CD4-positive, alpha-beta memory T cell (primary cell): ENCODE measurements at regions of chr1 and their contacts with region 1.

Region 1: GRCh38 chr1:32335790-32336590 is at the start of gene MARCKSL1:
- DNase-seq: peak; percentile 82 to 85 (median 85)
- H3K4me3 ChIP-seq: peak within 1 kb of the TSS; percentile 29 to 48
- H3K4me3 Mint-ChIP-seq: peak within 1 kb of the TSS; percentile 83 to 92 (median 87)
- H3K27ac ChIP-seq: peak within 1 kb of the TSS; percentile 45
- H3K27ac Mint-ChIP-seq: peak within 1 kb of the TSS; percentile 31 to 95 (median 85)
- H3K4me1 ChIP-seq: peaks cover 40% of the 10 kb centered on the region
- H3K4me1 Mint-ChIP-seq: peaks cover 26 to 44% (median 34%) of the 10 kb centered on the region in 4 donors
- H3K27me3 ChIP-seq: no peaks in the 10 kb centered on the region
- H3K27me3 Mint-ChIP-seq: no peaks in the 10 kb centered on the region
- total RNA-seq, gene MARCKSL1: 46.5 to 47.3 TPM

Region 2: GRCh38 chr1:32200226-32201010 is 135.6 kb before region 1 on chr1 and contains the start of gene CCDC28B:
- CTCF ChIA-PET with region 1: no interaction called
- POLR2A ChIA-PET with region 1: interaction called, 14 read pairs
- intact Hi-C with region 1: no loop called
- DNase-seq: peak; percentile 51 to 73 (median 58)
- H3K4me3 ChIP-seq: peak within 1 kb of the TSS; percentile 57 to 85
- H3K4me3 Mint-ChIP-seq: peak within 1 kb of the TSS; percentile 85 to 95 (median 92)
- H3K27ac ChIP-seq: peak within 1 kb of the TSS; percentile 84
- H3K27ac Mint-ChIP-seq: peak within 1 kb of the TSS; percentile 87 to 97 (median 95)
- H3K4me1 ChIP-seq: peaks cover 59% of the 10 kb centered on the region
- H3K4me1 Mint-ChIP-seq: peaks cover 38 to 76% (median 56%) of the 10 kb centered on the region in 4 donors
- H3K27me3 ChIP-seq: no peaks in the 10 kb centered on the region
- H3K27me3 Mint-ChIP-seq: no peaks in the 10 kb centered on the region
- total RNA-seq, gene CCDC28B: 4.2 to 5.1 TPM

Region 3: DNA sequence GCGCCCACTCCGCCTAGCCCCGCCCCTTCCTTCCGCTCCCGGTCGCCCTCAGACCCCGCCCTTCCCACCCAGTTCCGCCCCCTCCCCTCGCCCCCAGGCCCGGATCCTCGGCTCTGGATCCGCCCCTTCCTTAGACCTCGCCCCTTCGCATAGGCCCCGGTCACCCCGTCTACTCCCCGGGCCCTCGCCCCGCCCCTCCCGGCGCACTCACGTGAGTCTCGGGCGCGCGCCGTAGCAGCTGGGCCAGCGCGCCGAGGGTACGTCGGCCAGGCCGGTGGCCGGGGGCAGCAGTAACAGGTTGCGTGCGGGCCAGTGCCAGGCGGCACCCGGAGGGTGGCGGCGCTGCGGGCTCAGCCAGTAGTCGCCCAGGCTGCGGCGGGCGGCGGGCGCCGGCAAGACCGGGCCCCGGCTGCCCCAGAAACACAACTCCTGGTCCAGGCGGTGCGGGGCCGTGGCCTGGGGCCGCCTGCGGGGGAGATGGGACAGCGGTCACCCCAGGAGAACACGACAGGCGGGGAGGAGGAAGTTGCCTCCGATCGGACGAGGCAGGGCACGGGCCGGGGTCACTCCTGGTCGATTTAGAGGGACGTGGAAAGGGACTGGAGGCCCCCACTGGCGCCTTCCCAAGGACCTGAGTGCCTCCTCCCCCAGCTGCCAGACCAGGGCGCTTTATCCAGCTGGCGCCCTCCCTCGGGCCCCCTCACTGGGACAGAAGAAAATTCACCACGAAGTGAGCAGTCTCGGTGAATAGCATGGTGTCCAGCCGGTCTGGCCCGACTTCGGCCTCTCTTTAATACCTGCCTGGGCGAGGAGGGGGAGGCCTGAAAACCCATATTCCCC is 15.6 kb after region 1 on chr1:
- CTCF ChIA-PET with region 1: interaction called, 13 read pairs
- POLR2A ChIA-PET with region 1: interaction called, 173 read pairs
- intact Hi-C with region 1: loop called (anchors 1 kb)
- DNase-seq: peak; percentile 90 to 94 (median 91)
- H3K4me3 ChIP-seq: peak overlapping the region; percentile 52 to 65
- H3K4me3 Mint-ChIP-seq: peak overlapping the region; percentile 71 to 90 (median 82)
- H3K27ac ChIP-seq: peak overlapping the region; percentile 71
- H3K27ac Mint-ChIP-seq: peak overlapping the region; percentile 86 to 97 (median 92)
- H3K4me1 ChIP-seq: peaks cover 39% of the 10 kb centered on the region
- H3K4me1 Mint-ChIP-seq: peaks cover 22 to 62% (median 39%) of the 10 kb centered on the region in 4 donors
- H3K27me3 ChIP-seq: no peaks in the 10 kb centered on the region
- H3K27me3 Mint-ChIP-seq: no peaks in the 10 kb centered on the region

Region 4: GRCh38 chr1:32372149-32372756 is 36.3 kb after region 1 on chr1:
- CTCF ChIA-PET with region 1: interaction called, 14 read pairs
- POLR2A ChIA-PET with region 1: interaction called, 26 read pairs
- intact Hi-C with region 1: loop called (anchors 1 kb)
- DNase-seq: peak; percentile 74 to 86 (median 77)
- H3K4me3 ChIP-seq: no peak overlapping the region
- H3K4me3 Mint-ChIP-seq: peak overlapping the region in 4 of 8 donors; percentile 5 to 36 (median 16)
- H3K27ac ChIP-seq: no peak overlapping the region
- H3K27ac Mint-ChIP-seq: peak overlapping the region in 6 of 7 donors; percentile 10 to 80 (median 47)
- H3K4me1 ChIP-seq: peaks cover 15% of the 10 kb centered on the region
- H3K4me1 Mint-ChIP-seq: peaks cover 13 to 22% (median 20%) of the 10 kb centered on the region in 4 donors
- H3K27me3 ChIP-seq: no peaks in the 10 kb centered on the region
- H3K27me3 Mint-ChIP-seq: no peaks in the 10 kb centered on the region

Region 5: GRCh38 chr1:32413507-32414185 is 77.7 kb after region 1 on chr1:
- CTCF ChIA-PET with region 1: no interaction called
- POLR2A ChIA-PET with region 1: no interaction called
- intact Hi-C with region 1: loop called (anchors 1 kb)
- DNase-seq: peak; percentile 70 to 81 (median 73)
- H3K4me3 ChIP-seq: no peak overlapping the region
- H3K4me3 Mint-ChIP-seq: no peak overlapping the region
- H3K27ac ChIP-seq: no peak overlapping the region
- H3K27ac Mint-ChIP-seq: peak overlapping the region in 2 of 7 donors; percentile 40 to 54
- H3K4me1 ChIP-seq: no peaks in the 10 kb centered on the region
- H3K4me1 Mint-ChIP-seq: peaks cover 2 to 3% (median 3%) of the 10 kb centered on the region in 4 donors
- H3K27me3 ChIP-seq: no peaks in the 10 kb centered on the region
- H3K27me3 Mint-ChIP-seq: peaks cover 8 to 9% of the 10 kb centered on the region in 2 donors

Region 6: DNA sequence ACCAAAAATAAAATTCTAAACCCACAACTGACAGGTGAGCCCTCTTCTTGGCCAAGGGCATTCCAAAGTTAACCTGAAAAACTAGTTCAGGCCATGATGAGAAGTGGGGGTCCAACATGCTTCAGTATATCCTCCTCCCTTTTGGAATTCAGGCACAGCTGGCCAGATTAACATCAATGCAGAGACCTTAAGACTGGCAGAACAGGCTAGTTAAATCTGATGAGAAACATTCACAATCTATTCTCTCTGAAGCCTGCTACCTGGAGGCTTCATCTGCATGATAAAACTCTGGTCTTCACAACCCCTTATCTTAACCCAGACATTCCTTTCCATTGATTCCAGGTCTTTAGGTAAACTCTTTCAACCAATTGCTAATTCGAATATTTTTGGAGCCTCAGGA is 102.1 kb after region 1 on chr1:
- CTCF ChIA-PET with region 1: no interaction called
- POLR2A ChIA-PET with region 1: no interaction called
- intact Hi-C with region 1: no loop called
- DNase-seq: no peak
- H3K4me3 ChIP-seq: no peak overlapping the region
- H3K4me3 Mint-ChIP-seq: no peak overlapping the region
- H3K27ac ChIP-seq: no peak overlapping the region
- H3K27ac Mint-ChIP-seq: no peak overlapping the region
- H3K4me1 ChIP-seq: no peaks in the 10 kb centered on the region
- H3K4me1 Mint-ChIP-seq: no peaks in the 10 kb centered on the region
- H3K27me3 ChIP-seq: no peaks in the 10 kb centered on the region
- H3K27me3 Mint-ChIP-seq: peaks cover 11 to 33% of the 10 kb centered on the region in 2 donors